ENCODE measurements at regions of chr18 and their contacts with region 1.

Region 1: GRCh38 chr18:22391407-22392345 is 26.0 kb downstream of the CTAGE1 start:
- DNase-seq: no peak
- H3K4me3 ChIP-seq: no peak overlapping the region
- H3K4me3 Mint-ChIP-seq: no peak overlapping the region
- H3K27ac ChIP-seq: no peak overlapping the region
- H3K27ac Mint-ChIP-seq: peak overlapping the region in 1 of 7 donors; percentile 19
- H3K4me1 ChIP-seq: no peaks in the 10 kb centered on the region
- H3K4me1 Mint-ChIP-seq: no peaks in the 10 kb centered on the region
- H3K27me3 ChIP-seq: no peaks in the 10 kb centered on the region
- H3K27me3 Mint-ChIP-seq: peaks cover 0 to 5% (median 0%) of the 10 kb centered on the region in 3 donors
- CTCF ChIP-seq: no peak

Region 2: DNA sequence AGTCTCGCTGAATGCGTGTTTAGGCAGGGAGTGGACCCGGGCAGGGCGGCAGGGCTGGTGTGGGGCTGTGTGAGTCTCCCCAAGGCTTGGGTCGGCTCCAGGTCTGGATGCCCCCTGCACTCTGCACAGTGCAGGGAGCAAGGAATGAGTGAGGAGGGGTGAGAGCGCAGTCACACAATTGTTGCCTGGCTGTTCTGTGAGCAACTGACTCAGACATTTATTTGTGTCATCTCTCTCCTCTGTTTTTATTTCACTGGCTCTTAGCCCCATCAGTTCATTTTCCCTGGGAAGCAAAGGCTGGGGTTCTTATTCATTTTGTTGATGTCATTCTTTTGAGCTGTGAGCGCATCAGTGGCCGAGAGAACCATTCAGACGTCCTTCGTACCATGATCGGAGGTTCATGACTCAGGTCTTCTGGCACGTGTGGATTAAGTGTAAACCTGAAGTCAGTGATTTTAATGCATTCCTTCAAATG is 161.2 kb before region 1 on chr18:
- intact Hi-C with region 1: no loop called
- DNase-seq: no peak
- H3K4me3 ChIP-seq: no peak overlapping the region
- H3K4me3 Mint-ChIP-seq: no peak overlapping the region
- H3K27ac ChIP-seq: no peak overlapping the region
- H3K27ac Mint-ChIP-seq: no peak overlapping the region
- H3K4me1 ChIP-seq: no peaks in the 10 kb centered on the region
- H3K4me1 Mint-ChIP-seq: no peaks in the 10 kb centered on the region
- H3K27me3 ChIP-seq: no peaks in the 10 kb centered on the region
- H3K27me3 Mint-ChIP-seq: peaks cover 2 to 4% (median 3%) of the 10 kb centered on the region in 3 donors
- CTCF ChIP-seq: no peak

Region 3: GRCh38 chr18:22314420-22314819 is 77.3 kb before region 1 on chr18:
- intact Hi-C with region 1: loop called in 1 of 2 experiments (anchors 10 kb)
- DNase-seq: no peak
- H3K4me3 ChIP-seq: no peak overlapping the region
- H3K4me3 Mint-ChIP-seq: no peak overlapping the region
- H3K27ac ChIP-seq: no peak overlapping the region
- H3K27ac Mint-ChIP-seq: no peak overlapping the region
- H3K4me1 ChIP-seq: peaks cover 6 to 7% of the 10 kb centered on the region in 2 donors
- H3K4me1 Mint-ChIP-seq: peaks cover 12% of the 10 kb centered on the region
- H3K27me3 ChIP-seq: no peaks in the 10 kb centered on the region
- H3K27me3 Mint-ChIP-seq: peaks cover 2 to 7% (median 3%) of the 10 kb centered on the region in 3 donors
- CTCF ChIP-seq: no peak

Measured in CD14-positive monocyte (primary cell).